Breast epithelium (tissue), 4 donors: ENCODE measurements at regions of chr14 and their contacts with region 1.

Region 1: DNA sequence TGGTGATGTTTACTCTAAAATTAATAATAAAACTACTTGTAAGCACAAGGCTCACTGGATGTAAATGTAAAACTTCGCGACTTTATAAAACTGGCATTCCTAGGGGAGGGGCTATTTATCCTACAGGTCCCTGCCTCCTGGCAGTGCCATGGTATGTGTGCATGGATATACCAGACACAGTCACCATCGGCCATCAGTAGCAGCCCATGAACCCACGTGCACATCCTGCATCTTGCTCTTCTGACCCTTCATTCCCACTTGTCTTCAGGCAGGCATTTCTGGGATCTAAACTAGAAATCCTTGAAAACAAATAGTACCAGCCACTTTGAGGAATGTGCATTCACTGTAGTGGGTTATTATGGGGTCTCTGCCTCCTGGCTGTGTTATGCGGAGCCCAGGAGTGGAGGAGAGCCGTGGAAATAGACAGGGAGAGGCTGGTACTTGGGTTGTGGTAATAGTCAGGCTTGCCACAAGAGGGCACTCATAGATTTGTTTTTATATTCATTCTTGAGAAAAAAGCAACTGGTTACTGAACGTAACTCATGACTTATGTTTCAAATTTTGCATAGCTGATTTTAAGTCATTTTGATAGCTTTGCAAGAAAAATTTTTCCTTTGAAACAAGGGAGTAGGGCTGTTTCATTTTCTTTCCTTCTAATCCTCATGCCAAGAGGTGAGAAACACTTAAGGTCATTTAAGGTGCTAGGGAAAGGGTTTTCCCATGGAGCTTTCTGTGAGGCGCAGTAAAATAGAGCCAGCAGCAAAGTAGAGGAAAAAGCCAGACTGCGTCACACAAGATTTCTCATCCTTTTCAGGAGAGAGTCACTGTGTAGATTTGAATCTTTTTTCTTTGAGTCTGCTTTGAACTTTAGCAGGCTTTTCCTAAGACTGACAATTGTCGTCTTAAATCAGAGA is 17.4 kb upstream of the GALNT16 start:
- DNase-seq: peak in 1 of 2 donors; percentile 45
- H3K4me3 ChIP-seq: no peak overlapping the region
- H3K27ac ChIP-seq: peak overlapping the region; percentile 17 to 38
- H3K4me1 ChIP-seq: no peaks in the 10 kb centered on the region
- H3K27me3 ChIP-seq: no peaks in the 10 kb centered on the region
- CTCF ChIP-seq: peak; percentile 79 to 84 (median 81)
- POLR2A ChIP-seq: no peak

Region 2: DNA sequence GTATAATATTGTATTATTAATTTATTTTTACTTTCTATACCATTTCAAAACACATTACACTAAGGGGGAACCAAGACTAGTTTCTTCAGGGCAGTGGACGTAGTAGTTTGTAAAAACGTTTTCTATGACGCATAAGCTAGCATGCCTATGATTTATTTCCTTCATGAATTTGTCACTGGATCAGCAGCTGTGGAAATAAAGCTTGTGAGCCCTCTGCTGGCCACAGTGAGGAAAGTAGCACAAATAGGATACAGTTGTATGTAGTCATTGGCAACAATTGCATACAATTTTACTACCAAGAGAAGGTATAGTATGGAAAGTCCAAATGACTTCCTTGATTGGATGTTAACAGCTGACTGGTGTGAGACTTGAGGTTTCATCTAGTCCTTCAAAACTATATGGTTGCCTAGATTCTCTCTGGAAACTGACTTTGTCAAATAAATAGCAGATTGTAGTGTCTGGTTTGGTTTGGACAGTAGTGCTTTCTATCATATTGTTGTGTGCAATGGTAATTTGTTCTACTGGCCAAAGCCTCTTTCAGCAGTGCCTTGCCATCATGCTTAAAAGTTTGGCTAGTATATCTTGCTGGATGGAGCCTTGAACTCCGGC is 217.6 kb after region 1 on chr14:
- intact Hi-C with region 1: loop called (anchors 10 kb)
- DNase-seq: peak; percentile 51 to 59
- H3K4me3 ChIP-seq: no peak overlapping the region
- H3K27ac ChIP-seq: no peak overlapping the region
- H3K4me1 ChIP-seq: no peaks in the 10 kb centered on the region
- H3K27me3 ChIP-seq: no peaks in the 10 kb centered on the region
- CTCF ChIP-seq: peak; percentile 70 to 89 (median 84)
- POLR2A ChIP-seq: no peak

Region 3: GRCh38 chr14:69574263-69574953 is 331.8 kb after region 1 on chr14 and contains the start of gene CCDC177:
- intact Hi-C with region 1: no loop called
- DNase-seq: peak; percentile 39 to 74
- H3K4me3 ChIP-seq: peak within 1 kb of the TSS in 2 of 3 donors; percentile 37 to 62
- H3K27ac ChIP-seq: no peak within 1 kb of the TSS
- H3K4me1 ChIP-seq: peaks cover 5 to 17% of the 10 kb centered on the region in 2 donors
- H3K27me3 ChIP-seq: peaks cover 5 to 65% of the 10 kb centered on the region in 2 donors
- CTCF ChIP-seq: peak; percentile 71 to 86 (median 78)
- POLR2A ChIP-seq: no peak
- total RNA-seq, gene CCDC177: 0.29 to 0.33 TPM in 2 of 3 donors, not detected in the other